CD8-positive, alpha-beta T cell (primary cell): ENCODE measurements at regions of chr1 and their contacts with region 1.

Region 1: DNA sequence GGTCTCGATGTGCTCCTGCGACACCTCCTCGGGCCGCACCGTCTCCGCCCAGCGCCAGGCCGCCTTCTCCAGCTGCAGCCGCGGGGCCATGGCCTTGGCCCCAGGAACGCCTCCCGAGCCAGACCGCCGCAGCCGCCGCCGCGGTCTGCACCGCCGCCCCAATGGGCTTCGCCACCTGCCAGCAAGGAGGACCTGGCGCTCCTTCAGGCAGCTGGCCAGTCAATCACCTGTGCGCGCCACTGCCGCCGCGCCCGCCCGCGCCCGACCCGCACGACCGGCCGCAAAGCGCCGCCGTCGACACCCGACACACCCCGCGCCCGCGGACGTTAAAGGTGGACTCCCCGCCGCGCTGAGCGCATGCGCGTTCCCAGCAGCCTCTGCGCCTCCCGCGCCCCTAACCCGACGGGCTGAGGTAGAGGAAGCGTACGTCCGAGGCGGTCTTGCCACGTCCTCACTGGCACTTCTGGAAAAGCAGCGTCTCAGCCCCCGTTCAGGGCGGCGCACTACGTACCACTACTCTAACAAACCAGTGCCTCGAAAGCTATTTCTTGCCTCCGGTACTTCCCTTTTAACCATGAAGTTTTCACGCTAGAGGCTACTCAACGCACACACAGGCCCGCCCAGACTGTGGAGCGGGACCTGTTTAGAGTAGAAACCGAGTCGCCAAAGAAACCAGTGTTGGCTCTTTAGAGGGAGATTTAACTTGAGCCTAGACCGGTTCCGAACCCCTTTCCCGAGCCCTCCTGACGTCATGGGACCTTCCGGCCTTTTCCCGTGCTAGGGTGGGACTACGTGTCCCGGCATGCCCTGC is at the start of gene USP48:
- DNase-seq: peak; percentile 93 to 98 (median 96)
- ATAC-seq: peak; percentile 83
- H3K4me3 ChIP-seq: peak within 1 kb of the TSS; percentile 89 to 100
- H3K4me3 Mint-ChIP-seq: peak within 1 kb of the TSS; percentile 98
- H3K27ac ChIP-seq: peak within 1 kb of the TSS; percentile 100
- H3K27ac Mint-ChIP-seq: peak within 1 kb of the TSS; percentile 100
- H3K4me1 ChIP-seq: peaks cover 10% of the 10 kb centered on the region
- H3K4me1 Mint-ChIP-seq: peaks cover 31% of the 10 kb centered on the region
- H3K27me3 ChIP-seq: no peaks in the 10 kb centered on the region
- H3K27me3 Mint-ChIP-seq: no peaks in the 10 kb centered on the region
- CTCF ChIP-seq: no peak
- total RNA-seq, gene USP48: 58.7 to 68.3 TPM

Region 2: GRCh38 chr1:20661207-20662109 is 1121.6 kb before region 1 on chr1 and contains the start of gene DDOST:
- CTCF ChIA-PET with region 1: no interaction called
- POLR2A ChIA-PET with region 1: no interaction called
- intact Hi-C with region 1: loop called in 1 of 2 experiments (anchors 10 kb)
- DNase-seq: peak; percentile 86 to 98 (median 94)
- ATAC-seq: peak; percentile 94
- H3K4me3 ChIP-seq: peak within 1 kb of the TSS; percentile 85 to 95
- H3K4me3 Mint-ChIP-seq: peak within 1 kb of the TSS; percentile 98
- H3K27ac ChIP-seq: peak within 1 kb of the TSS; percentile 81 to 87
- H3K27ac Mint-ChIP-seq: peak within 1 kb of the TSS; percentile 98
- H3K4me1 ChIP-seq: peaks cover 28% of the 10 kb centered on the region
- H3K4me1 Mint-ChIP-seq: peaks cover 52% of the 10 kb centered on the region
- H3K27me3 ChIP-seq: no peaks in the 10 kb centered on the region
- H3K27me3 Mint-ChIP-seq: no peaks in the 10 kb centered on the region
- CTCF ChIP-seq: peak; percentile 27
- total RNA-seq, gene DDOST: 97.5 to 114 TPM

Region 3: DNA sequence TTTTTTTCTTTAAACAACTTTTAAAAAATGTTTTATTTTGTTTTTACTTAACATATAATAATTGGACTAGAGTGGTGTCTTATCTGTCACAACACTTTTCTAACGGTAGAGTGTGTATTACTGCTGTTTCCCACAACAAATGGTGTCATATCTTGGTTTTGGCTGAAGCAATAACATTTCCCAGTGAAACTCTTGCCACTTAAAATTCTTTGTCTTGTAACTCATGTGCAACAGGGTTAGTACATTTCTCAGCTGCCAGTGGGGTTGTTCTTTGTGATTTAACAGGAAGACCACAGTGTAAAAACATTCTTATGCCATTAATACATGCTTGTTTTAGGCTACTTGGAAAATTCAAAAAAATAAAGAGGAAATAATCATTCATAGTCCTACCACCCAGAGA is 230.4 kb before region 1 on chr1:
- CTCF ChIA-PET with region 1: no interaction called
- POLR2A ChIA-PET with region 1: no interaction called
- intact Hi-C with region 1: no loop called
- DNase-seq: no peak
- ATAC-seq: no peak
- H3K4me3 ChIP-seq: no peak overlapping the region
- H3K4me3 Mint-ChIP-seq: no peak overlapping the region
- H3K27ac ChIP-seq: no peak overlapping the region
- H3K27ac Mint-ChIP-seq: no peak overlapping the region
- H3K4me1 ChIP-seq: no peaks in the 10 kb centered on the region
- H3K4me1 Mint-ChIP-seq: no peaks in the 10 kb centered on the region
- H3K27me3 ChIP-seq: no peaks in the 10 kb centered on the region
- H3K27me3 Mint-ChIP-seq: peaks cover 21% of the 10 kb centered on the region
- CTCF ChIP-seq: no peak

Region 4: GRCh38 chr1:21659099-21659923 is 123.8 kb before region 1 on chr1:
- CTCF ChIA-PET with region 1: no interaction called
- POLR2A ChIA-PET with region 1: no interaction called
- intact Hi-C with region 1: loop called in 1 of 2 experiments (anchors 2 kb)
- DNase-seq: peak; percentile 65 to 90 (median 84)
- ATAC-seq: peak; percentile 99
- H3K4me3 ChIP-seq: peak overlapping the region; percentile 8 to 10
- H3K4me3 Mint-ChIP-seq: peak overlapping the region; percentile 32
- H3K27ac ChIP-seq: no peak overlapping the region
- H3K27ac Mint-ChIP-seq: no peak overlapping the region
- H3K4me1 ChIP-seq: peaks cover 8% of the 10 kb centered on the region
- H3K4me1 Mint-ChIP-seq: peaks cover 5% of the 10 kb centered on the region
- H3K27me3 ChIP-seq: peaks cover 5 to 10% of the 10 kb centered on the region in 2 experiments
- H3K27me3 Mint-ChIP-seq: peaks cover 17% of the 10 kb centered on the region
- CTCF ChIP-seq: peak; percentile 93

Region 5: DNA sequence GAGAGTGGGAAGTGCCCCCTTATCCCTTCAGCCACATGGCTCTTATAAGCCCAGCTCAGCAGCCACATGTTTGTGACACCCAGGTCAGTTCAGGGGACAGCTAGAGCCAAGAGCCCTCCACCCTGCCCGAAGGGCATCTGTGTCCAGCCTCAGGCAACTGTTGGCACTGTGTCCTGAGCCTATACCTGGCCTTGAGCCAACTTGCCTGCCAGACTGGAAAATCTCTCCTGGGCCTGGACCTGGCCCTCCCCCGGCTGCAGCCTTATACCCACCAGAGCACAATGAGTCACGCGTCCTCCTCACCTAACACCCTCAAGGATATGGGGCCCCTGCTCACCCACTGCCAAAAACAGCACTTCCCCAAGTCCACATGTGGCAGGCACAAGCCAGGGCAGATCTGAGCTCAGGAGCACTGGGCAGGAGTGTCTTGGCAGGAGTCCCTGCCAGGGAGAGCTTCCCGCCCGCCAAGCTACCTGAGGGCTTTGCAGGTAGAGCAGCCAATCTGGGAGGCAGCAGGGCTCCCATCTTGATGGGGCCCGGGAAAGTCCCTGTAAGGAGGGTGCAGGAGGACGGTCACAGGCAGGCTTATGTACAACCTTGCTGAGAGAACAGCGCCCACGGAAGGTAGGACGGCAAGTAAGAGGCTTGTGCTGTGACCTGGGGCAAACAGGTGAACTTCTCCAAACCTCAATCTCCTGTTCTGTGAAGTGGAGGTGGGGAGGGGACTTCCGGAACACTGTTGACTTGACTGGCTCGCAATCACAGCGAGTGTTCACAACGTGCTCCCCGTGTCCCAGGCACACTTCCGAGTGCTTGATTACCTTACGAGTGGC is 173.9 kb after region 1 on chr1:
- CTCF ChIA-PET with region 1: no interaction called
- POLR2A ChIA-PET with region 1: no interaction called
- intact Hi-C with region 1: loop called in 1 of 2 experiments (anchors 1 kb)
- DNase-seq: peak; percentile 14 to 86 (median 49)
- ATAC-seq: peak; percentile 91
- H3K4me3 ChIP-seq: peak overlapping the region; percentile 19 to 51
- H3K4me3 Mint-ChIP-seq: peak overlapping the region; percentile 73
- H3K27ac ChIP-seq: peak overlapping the region; percentile 6 to 17
- H3K27ac Mint-ChIP-seq: peak overlapping the region; percentile 91
- H3K4me1 ChIP-seq: peaks cover 32% of the 10 kb centered on the region
- H3K4me1 Mint-ChIP-seq: peaks cover 33% of the 10 kb centered on the region
- H3K27me3 ChIP-seq: no peaks in the 10 kb centered on the region
- H3K27me3 Mint-ChIP-seq: no peaks in the 10 kb centered on the region
- CTCF ChIP-seq: no peak

Region 6: DNA sequence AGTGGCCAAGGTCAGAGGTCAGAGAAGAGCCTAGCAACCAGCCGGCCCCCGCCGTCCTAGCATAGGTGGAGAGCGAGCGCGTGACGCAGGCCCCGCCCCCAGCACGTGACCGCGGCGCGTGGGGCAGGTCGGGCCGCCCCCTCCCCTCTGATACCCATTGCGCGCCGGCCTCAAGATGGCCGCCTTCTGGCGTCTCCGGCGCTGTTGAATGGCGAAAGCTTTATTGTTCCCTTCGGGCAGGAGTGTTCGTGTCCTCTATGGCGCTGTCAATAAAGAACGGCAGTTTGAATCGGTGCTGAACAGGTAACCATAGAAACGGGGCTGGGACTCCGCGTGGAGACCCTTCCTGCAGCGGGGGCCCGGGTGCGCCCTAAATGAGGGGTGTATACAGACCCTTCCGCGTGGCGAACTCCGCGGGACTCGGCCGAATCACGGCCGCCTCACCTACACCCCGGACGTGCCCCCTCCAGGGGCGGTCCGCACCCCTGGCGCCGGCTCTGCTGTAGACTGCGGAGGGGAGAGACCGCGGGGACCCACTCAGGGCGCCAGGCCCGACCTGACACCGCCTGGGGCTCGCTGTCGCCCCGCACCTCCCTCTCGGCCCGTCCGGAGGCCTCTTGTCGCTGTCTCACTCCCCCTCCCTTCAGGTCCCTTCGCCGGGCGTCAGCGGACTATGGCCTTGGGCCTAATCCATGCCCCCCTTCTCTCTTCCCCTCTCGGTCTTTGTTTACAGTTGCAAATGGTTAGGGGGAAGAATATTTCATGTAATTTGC is 668.8 kb after region 1 on chr1 and contains the start of gene ZBTB40:
- CTCF ChIA-PET with region 1: no interaction called
- POLR2A ChIA-PET with region 1: no interaction called
- intact Hi-C with region 1: loop called (anchors 1 kb)
- DNase-seq: peak; percentile 83 to 98 (median 93)
- ATAC-seq: peak; percentile 89
- H3K4me3 ChIP-seq: peak within 1 kb of the TSS; percentile 71 to 92
- H3K4me3 Mint-ChIP-seq: peak within 1 kb of the TSS; percentile 93
- H3K27ac ChIP-seq: peak within 1 kb of the TSS; percentile 82 to 93
- H3K27ac Mint-ChIP-seq: peak within 1 kb of the TSS; percentile 93
- H3K4me1 ChIP-seq: peaks cover 18% of the 10 kb centered on the region
- H3K4me1 Mint-ChIP-seq: peaks cover 46% of the 10 kb centered on the region
- H3K27me3 ChIP-seq: no peaks in the 10 kb centered on the region
- H3K27me3 Mint-ChIP-seq: no peaks in the 10 kb centered on the region
- CTCF ChIP-seq: no peak
- total RNA-seq, gene ZBTB40: 20.9 to 21.3 TPM